Activated T-helper 1 cell treated with anti-CD3 and anti-CD28 coated beads, Interleukin-12 subunit alpha, Interleukin-12 subunit beta, Interleukin-2, Interleukin-4 antibody, amounts not matched to agents 30 ng/mL and 10 ng/mL and 1 ng/mL, durations not matched to agents 14 hours and 24 hours and 36 hours (primary cell): ENCODE measurements at regions of chr19 and their contacts with region 1.

Region 1: GRCh38 chr19:14198384-14199376 is 7.3 kb downstream of the ADGRL1 start:
- DNase-seq: no peak
- H3K4me3 Mint-ChIP-seq: no peak overlapping the region
- H3K27ac Mint-ChIP-seq: no peak overlapping the region
- H3K4me1 Mint-ChIP-seq: peaks cover 31% of the 10 kb centered on the region
- H3K27me3 Mint-ChIP-seq: peaks cover 12% of the 10 kb centered on the region

Region 2: GRCh38 chr19:14277608-14278007 is 78.9 kb after region 1 on chr19:
- intact Hi-C with region 1: loop called (anchors 10 kb)
- DNase-seq: no peak
- H3K4me3 Mint-ChIP-seq: no peak overlapping the region
- H3K27ac Mint-ChIP-seq: no peak overlapping the region
- H3K4me1 Mint-ChIP-seq: no peaks in the 10 kb centered on the region
- H3K27me3 Mint-ChIP-seq: peaks cover 2% of the 10 kb centered on the region

Region 3: GRCh38 chr19:14405758-14406644 is 207.3 kb after region 1 on chr19:
- intact Hi-C with region 1: loop called (anchors 5 kb)
- DNase-seq: peak; percentile 85
- H3K4me3 Mint-ChIP-seq: no peak overlapping the region
- H3K27ac Mint-ChIP-seq: peak overlapping the region; percentile 65
- H3K4me1 Mint-ChIP-seq: no peaks in the 10 kb centered on the region
- H3K27me3 Mint-ChIP-seq: no peaks in the 10 kb centered on the region

Region 4: DNA sequence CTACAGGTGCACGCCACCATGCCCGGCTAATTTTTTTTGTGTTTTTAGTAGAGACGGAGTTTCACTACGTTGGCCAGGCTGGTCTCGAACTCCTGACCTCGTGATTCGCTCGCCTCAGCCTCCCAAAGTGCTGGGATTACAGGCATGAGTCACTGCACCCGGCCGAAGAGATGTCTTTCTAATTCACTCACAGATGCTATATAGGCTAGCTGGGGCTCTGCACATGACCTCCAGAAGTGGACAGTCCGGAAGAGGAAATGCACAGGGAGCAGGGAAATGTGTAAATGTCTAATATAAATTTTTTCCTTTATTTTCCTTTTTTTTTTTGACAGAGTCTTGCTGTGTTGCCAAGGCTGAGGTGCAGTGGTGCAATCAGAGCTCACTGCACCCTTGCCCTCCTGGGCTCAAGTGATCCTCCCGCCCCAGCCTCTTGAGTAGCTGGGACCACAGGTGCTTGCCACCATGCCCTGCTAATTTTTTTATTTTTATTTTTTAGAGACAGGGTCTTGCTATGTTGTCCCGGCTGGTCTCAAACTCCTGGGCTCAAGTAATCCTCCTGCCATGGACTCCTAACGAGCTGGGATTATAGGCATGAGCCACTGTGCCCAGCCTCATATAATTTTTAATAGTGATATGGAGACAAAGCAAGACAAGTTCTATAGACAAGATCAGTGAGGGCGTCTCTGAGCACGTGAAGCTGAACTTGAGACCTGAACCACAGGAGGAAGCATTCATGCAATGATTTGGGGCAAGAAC is 288.9 kb after region 1 on chr19:
- intact Hi-C with region 1: loop called (anchors 2 kb)
- DNase-seq: no peak
- H3K4me3 Mint-ChIP-seq: no peak overlapping the region
- H3K27ac Mint-ChIP-seq: no peak overlapping the region
- H3K4me1 Mint-ChIP-seq: peaks cover 6% of the 10 kb centered on the region
- H3K27me3 Mint-ChIP-seq: no peaks in the 10 kb centered on the region